SK-N-SH (cell line): ENCODE measurements at regions of chr1 and their contacts with region 1.

Region 1: GRCh38 chr1:18681423-18681835 is 50.8 kb downstream of the PAX7 start:
- DNase-seq: peak; percentile 78
- H3K4me3 ChIP-seq: no peak overlapping the region
- H3K27ac ChIP-seq: no peak overlapping the region
- H3K4me1 ChIP-seq: no peaks in the 10 kb centered on the region
- H3K27me3 ChIP-seq: no peaks in the 10 kb centered on the region
- CTCF ChIP-seq: peak; percentile 60
- EP300 ChIP-seq: no peak
- RAD21 ChIP-seq: peak; percentile 67

Region 2: GRCh38 chr1:18668796-18669404 is 12.5 kb before region 1 on chr1:
- CTCF ChIA-PET with region 1: interaction called, 10 read pairs
- POLR2A ChIA-PET with region 1: no interaction called
- DNase-seq: no peak
- H3K4me3 ChIP-seq: no peak overlapping the region
- H3K27ac ChIP-seq: no peak overlapping the region
- H3K4me1 ChIP-seq: peaks cover 0 to 13% of the 10 kb centered on the region in 2 experiments; a peak in 1 of 4 replicates
- H3K27me3 ChIP-seq: no peaks in the 10 kb centered on the region
- CTCF ChIP-seq: no peak
- EP300 ChIP-seq: no peak
- RAD21 ChIP-seq: no peak

Region 3: GRCh38 chr1:18693256-18694098 is 12.0 kb after region 1 on chr1:
- CTCF ChIA-PET with region 1: interaction called, 11 read pairs
- POLR2A ChIA-PET with region 1: no interaction called
- DNase-seq: no peak
- H3K4me3 ChIP-seq: no peak overlapping the region
- H3K27ac ChIP-seq: no peak overlapping the region
- H3K4me1 ChIP-seq: no peaks in the 10 kb centered on the region; a peak in 1 of 4 replicates
- H3K27me3 ChIP-seq: no peaks in the 10 kb centered on the region
- CTCF ChIP-seq: no peak
- EP300 ChIP-seq: no peak
- RAD21 ChIP-seq: no peak

Region 4: DNA sequence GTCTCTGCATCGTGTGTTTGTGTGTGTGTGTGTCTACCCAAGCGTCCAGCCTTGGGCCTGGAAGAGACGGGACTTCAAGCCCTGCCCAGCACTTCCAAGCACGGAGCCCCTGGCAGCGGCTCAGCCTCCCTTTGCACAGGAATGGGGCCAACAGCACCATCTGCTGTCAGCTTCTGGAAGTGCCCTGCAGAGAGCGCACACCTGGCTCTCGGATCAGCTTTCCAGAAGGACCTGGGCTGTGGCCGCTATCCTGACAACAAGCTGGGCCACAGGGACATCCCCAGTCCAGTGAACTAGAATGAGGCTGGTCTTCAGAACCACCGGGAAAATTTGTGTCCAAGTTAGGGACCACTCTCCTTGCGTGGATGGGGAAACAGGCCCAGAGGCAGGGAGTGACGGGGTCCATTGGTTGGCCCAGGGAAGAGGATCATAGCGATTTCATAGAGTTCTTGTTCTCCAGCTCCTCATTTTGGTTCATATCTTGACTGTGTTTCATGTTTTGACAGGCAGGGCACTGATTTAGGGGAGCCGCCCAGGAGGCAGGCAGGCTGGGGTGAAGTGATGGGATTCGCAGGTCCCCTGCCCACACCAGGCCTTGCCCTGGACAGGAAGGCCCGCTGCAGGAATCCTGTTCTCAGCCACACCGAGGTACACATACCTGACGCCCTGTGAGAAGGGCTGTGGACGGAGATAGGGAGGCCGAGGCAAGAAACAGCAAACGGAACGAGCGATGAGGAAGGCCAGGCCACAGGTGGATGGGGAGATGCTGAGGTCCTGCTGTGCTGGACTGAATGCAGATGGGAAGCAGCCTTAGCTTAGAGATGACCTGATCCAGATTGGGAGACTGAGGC is 139.6 kb after region 1 on chr1:
- CTCF ChIA-PET with region 1: interaction called, 14 read pairs
- POLR2A ChIA-PET with region 1: no interaction called
- DNase-seq: peak; percentile 89
- H3K4me3 ChIP-seq: peak overlapping the region in 1 of 2 experiments; percentile 24; a peak in 1 of 4 replicates
- H3K27ac ChIP-seq: no peak overlapping the region
- H3K4me1 ChIP-seq: peaks cover 0 to 6% of the 10 kb centered on the region in 2 experiments; a peak in 1 of 4 replicates
- H3K27me3 ChIP-seq: no peaks in the 10 kb centered on the region
- CTCF ChIP-seq: peak; percentile 82
- EP300 ChIP-seq: no peak
- RAD21 ChIP-seq: peak; percentile 90